Activated CD4-positive, alpha-beta memory T cell treated with anti-CD3 and anti-CD28 coated beads for 36 hours (primary cell): ENCODE measurements at regions of chr18 and their contacts with region 1.

Region 1: DNA sequence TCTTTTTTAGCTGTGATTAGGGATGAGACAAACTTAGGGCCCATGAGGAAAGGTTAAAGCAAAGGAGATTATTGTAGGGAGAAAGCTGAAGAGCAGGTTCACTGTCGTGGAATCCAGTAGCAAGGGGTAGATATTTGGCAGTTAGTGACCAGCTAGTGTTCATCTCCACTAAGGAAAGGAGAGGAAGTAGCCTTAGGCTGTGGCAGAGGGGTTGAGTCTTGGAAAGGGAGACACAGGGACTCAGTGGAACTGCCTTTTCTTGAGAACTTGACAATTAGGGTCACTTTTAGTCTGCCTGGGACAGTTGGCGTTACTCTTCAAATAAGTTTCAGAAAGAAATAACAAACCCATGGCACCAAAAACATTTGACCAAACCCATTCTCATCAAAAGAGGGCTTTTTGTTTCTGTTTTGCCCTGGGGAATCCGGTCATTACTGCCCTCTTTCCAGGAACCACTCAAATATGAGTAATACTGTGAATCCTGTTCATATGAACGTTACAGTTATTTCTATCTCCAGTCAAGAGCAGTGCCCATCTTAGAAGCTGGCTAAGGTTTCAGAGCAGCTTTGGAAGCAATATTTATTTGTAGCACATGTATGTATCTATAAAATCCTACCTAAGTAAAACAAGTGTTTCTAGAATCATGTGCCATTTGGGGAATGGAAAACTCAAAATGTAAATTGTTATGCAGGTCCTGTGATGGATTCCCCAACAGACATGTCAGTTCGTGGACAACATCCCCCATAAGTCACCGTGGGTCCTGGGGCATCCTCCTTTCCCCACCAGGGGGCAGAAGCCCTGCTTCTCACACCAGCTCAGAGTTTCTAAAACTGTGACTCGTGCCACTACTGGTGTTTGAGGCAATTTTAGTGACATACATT is 77.3 kb upstream of the PHLPP1 start:
- DNase-seq: peak; percentile 73
- H3K4me3 Mint-ChIP-seq: no peak overlapping the region
- H3K27ac Mint-ChIP-seq: no peak overlapping the region
- H3K4me1 Mint-ChIP-seq: peaks cover 9% of the 10 kb centered on the region
- H3K27me3 Mint-ChIP-seq: peaks cover 24% of the 10 kb centered on the region

Region 2: GRCh38 chr18:62648036-62648649 is 10.1 kb after region 1 on chr18:
- CTCF ChIA-PET with region 1: interaction called, 12 read pairs
- POLR2A ChIA-PET with region 1: no interaction called
- intact Hi-C with region 1: no loop called
- DNase-seq: no peak
- H3K4me3 Mint-ChIP-seq: no peak overlapping the region
- H3K27ac Mint-ChIP-seq: no peak overlapping the region
- H3K4me1 Mint-ChIP-seq: no peaks in the 10 kb centered on the region
- H3K27me3 Mint-ChIP-seq: no peaks in the 10 kb centered on the region

Region 3: DNA sequence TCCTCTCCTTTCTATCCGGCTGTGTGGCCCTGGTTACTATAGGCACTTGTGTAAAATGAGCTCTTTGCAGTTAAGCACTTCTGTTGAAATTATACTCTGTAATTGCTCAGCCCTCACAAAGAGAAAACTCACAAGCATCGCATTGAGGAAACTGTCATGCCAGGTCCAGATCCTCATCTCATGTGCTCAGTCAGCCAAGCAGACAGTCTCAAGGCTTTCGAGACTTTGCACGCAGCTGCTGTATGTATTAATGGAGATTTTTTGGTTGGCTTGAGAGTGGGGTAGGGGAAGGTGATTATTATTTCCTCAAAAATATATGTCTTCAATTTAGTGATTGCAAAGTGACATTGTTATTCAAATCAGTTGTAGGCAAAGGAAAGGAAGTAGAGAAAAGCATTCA is 44.3 kb after region 1 on chr18:
- CTCF ChIA-PET with region 1: no interaction called
- POLR2A ChIA-PET with region 1: no interaction called
- intact Hi-C with region 1: no loop called
- DNase-seq: no peak
- H3K4me3 Mint-ChIP-seq: no peak overlapping the region
- H3K27ac Mint-ChIP-seq: no peak overlapping the region
- H3K4me1 Mint-ChIP-seq: no peaks in the 10 kb centered on the region
- H3K27me3 Mint-ChIP-seq: peaks cover 1% of the 10 kb centered on the region

Region 4: DNA sequence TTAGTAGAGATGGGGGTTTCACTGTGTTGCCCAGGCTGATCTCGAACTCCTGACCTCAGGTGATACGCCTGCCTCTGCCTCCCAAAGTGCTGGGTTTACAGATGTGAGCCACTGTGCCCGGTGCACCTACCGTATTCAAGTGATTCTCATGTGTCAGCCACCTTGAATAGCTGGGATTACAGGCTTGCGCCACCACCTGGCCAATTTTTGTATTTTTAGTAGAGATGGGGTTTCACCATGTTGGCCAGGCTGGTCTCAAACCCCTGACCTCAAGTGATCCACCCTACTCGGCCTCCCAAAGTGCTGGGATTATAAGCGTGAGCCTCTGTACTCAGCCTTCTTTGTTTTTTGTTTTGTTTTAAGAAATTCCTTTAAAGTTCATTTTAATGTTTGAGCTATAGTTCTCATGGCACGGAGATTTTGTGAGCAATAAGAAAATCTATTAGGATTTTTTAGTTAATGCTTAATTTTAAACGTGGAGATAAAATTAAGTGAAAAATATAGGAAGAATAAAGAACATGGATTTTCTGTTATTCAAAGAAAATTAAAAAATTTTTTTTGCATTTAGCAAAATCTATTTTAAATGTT is 319.9 kb after region 1 on chr18:
- CTCF ChIA-PET with region 1: interaction called, 7 read pairs
- POLR2A ChIA-PET with region 1: no interaction called
- intact Hi-C with region 1: loop called (anchors 1 kb)
- DNase-seq: peak; percentile 68
- H3K4me3 Mint-ChIP-seq: no peak overlapping the region
- H3K27ac Mint-ChIP-seq: no peak overlapping the region
- H3K4me1 Mint-ChIP-seq: peaks cover 5% of the 10 kb centered on the region
- H3K27me3 Mint-ChIP-seq: no peaks in the 10 kb centered on the region

Region 5: DNA sequence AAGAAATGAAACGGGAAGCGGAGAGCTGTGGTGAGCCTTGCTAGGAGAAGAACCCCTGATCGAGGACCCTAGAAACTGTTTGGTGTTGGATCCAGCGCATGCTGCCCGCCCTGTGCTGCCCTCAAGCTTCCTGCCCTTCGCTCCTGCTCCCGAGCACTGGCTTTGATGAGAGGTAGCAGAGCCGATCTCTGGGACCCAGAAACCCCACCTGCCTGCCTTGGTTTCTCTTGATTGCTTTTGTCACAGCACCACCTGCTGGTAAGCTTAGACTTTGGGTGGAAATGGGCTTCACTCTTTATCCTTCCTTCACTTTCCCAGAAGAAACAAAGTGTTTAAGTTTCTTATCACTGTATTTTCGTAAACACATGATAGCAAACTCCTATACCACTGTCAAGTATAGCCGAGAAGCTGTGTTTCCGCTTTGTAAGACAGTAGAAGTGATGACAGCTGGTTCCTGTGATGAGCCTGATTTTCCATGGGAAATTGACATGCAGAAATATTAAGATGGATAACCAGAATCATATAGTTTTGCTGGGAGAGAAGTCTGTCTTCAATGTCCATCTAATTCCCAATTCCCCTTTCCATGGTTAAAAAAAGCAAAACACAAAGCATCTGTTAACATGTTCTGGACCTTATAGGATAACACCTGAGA is 344.7 kb after region 1 on chr18:
- CTCF ChIA-PET with region 1: interaction called, 27 read pairs
- POLR2A ChIA-PET with region 1: no interaction called
- intact Hi-C with region 1: loop called (anchors 1 kb)
- DNase-seq: peak; percentile 66
- H3K4me3 Mint-ChIP-seq: no peak overlapping the region
- H3K27ac Mint-ChIP-seq: no peak overlapping the region
- H3K4me1 Mint-ChIP-seq: no peaks in the 10 kb centered on the region
- H3K27me3 Mint-ChIP-seq: no peaks in the 10 kb centered on the region